ENCODE measurements at regions of chrX and their contacts with region 1.

Region 1: GRCh38 chrX:118847676-118848075 is 24.1 kb downstream of the ZCCHC12 start:
- DNase-seq: peak; percentile 72
- H3K4me3 ChIP-seq: no peak overlapping the region
- H3K27ac ChIP-seq: no peak overlapping the region
- H3K4me1 ChIP-seq: no peaks in the 10 kb centered on the region
- H3K27me3 ChIP-seq: no peaks in the 10 kb centered on the region
- CTCF ChIP-seq: peak; percentile 71

Region 2: DNA sequence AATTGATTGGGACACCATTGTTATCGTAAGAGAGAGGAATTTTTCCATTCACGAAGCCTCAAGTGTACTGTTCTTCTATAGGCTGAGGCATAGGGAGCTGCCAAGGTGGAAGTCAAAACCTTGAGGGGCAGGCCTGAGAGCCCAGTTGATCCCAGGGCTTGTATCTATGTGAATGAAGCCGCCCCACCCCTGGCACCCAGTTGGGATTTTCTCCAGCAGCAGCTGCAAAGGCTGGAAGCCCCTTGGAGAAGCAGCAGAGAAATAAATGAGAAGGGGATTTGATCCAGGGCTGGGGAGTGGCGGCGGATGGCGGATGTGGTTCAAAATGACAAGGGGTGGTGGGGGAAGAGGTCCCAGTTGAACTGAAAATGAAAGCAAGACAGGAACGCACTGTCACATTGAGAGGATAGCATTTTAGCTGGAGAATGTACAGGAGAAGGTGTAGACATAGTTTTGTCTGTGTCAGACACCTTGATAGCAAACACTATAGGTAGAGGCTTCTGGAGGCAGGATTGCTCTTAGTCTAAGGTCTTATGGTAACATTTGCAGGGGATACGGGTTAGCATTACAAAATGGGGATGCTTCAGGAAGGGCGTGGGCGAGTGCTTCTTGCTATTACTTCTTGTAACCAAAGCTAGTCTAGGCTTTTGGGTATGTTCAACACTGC is 319.5 kb before region 1 on chrX:
- CTCF ChIA-PET with region 1: no interaction called
- POLR2A ChIA-PET with region 1: no interaction called
- intact Hi-C with region 1: no loop called
- DNase-seq: no peak
- H3K4me3 ChIP-seq: no peak overlapping the region
- H3K27ac ChIP-seq: no peak overlapping the region
- H3K4me1 ChIP-seq: no peaks in the 10 kb centered on the region
- H3K27me3 ChIP-seq: no peaks in the 10 kb centered on the region
- CTCF ChIP-seq: no peak

Region 3: GRCh38 chrX:119067023-119067739 is 219.5 kb after region 1 on chrX:
- CTCF ChIA-PET with region 1: interaction called, 4 read pairs
- POLR2A ChIA-PET with region 1: no interaction called
- intact Hi-C with region 1: loop called (anchors 2 kb)
- DNase-seq: peak; percentile 63
- H3K4me3 ChIP-seq: no peak overlapping the region
- H3K27ac ChIP-seq: no peak overlapping the region
- H3K4me1 ChIP-seq: peaks cover 12% of the 10 kb centered on the region
- H3K27me3 ChIP-seq: peaks cover 4% of the 10 kb centered on the region
- CTCF ChIP-seq: peak; percentile 75

Measured in A673 (cell line).